CD8-positive, alpha-beta T cell (primary cell): ENCODE measurements at regions of chr2 and their contacts with region 1.

Region 1: DNA sequence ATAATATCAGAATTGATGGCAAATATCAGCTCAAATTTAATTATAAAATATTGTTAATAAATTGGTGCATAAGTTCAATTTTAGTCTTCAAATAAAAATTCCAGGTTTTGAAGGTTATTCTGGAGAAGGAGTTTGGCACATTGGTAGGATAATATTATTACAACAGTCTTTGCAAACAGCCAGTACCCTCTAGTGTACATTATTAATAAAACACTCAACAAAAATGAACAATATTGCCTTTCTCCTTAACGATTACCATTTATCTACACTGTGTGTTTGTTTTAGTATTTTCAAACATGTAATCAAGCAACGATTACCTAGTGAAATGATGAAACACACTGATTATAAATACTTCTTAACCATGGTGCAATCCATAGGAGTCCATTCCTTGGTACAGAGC is 334.0 kb upstream of the FSIP2 start:
- DNase-seq: no peak
- ATAC-seq: no peak
- H3K4me3 ChIP-seq: no peak overlapping the region
- H3K4me3 Mint-ChIP-seq: no peak overlapping the region
- H3K27ac ChIP-seq: no peak overlapping the region
- H3K27ac Mint-ChIP-seq: no peak overlapping the region
- H3K4me1 ChIP-seq: no peaks in the 10 kb centered on the region
- H3K4me1 Mint-ChIP-seq: no peaks in the 10 kb centered on the region
- H3K27me3 ChIP-seq: no peaks in the 10 kb centered on the region
- H3K27me3 Mint-ChIP-seq: no peaks in the 10 kb centered on the region
- CTCF ChIP-seq: no peak

Region 2: DNA sequence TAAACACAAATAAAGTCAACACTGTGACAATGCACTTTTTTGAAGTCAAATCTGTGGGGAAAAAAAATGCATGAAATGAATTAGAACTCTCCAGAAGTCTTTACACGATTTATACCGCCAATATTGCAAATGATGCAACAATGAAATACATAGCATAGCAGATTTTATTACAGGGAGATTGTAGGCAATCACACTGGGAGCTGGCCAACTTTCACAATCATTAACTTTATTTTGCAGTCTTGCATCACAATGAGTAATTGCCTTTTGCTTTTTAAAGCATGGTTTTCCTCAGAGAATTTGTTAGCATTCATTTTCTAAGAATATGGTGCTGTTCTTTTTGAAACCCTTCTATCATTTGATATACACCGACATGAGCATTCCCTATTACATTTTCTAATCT is 32.4 kb before region 1 on chr2:
- CTCF ChIA-PET with region 1: no interaction called
- POLR2A ChIA-PET with region 1: no interaction called
- intact Hi-C with region 1: loop called in 1 of 2 experiments (anchors 1 kb)
- DNase-seq: no peak
- ATAC-seq: no peak
- H3K4me3 ChIP-seq: no peak overlapping the region
- H3K4me3 Mint-ChIP-seq: no peak overlapping the region
- H3K27ac ChIP-seq: no peak overlapping the region
- H3K27ac Mint-ChIP-seq: no peak overlapping the region
- H3K4me1 ChIP-seq: no peaks in the 10 kb centered on the region
- H3K4me1 Mint-ChIP-seq: no peaks in the 10 kb centered on the region
- H3K27me3 ChIP-seq: no peaks in the 10 kb centered on the region
- H3K27me3 Mint-ChIP-seq: no peaks in the 10 kb centered on the region
- CTCF ChIP-seq: no peak

Region 3: GRCh38 chr2:185384822-185385560 is 19.6 kb before region 1 on chr2:
- CTCF ChIA-PET with region 1: no interaction called
- POLR2A ChIA-PET with region 1: no interaction called
- intact Hi-C with region 1: no loop called
- DNase-seq: no peak
- ATAC-seq: no peak
- H3K4me3 ChIP-seq: no peak overlapping the region
- H3K4me3 Mint-ChIP-seq: no peak overlapping the region
- H3K27ac ChIP-seq: no peak overlapping the region
- H3K27ac Mint-ChIP-seq: no peak overlapping the region
- H3K4me1 ChIP-seq: no peaks in the 10 kb centered on the region
- H3K4me1 Mint-ChIP-seq: no peaks in the 10 kb centered on the region
- H3K27me3 ChIP-seq: no peaks in the 10 kb centered on the region
- H3K27me3 Mint-ChIP-seq: no peaks in the 10 kb centered on the region
- CTCF ChIP-seq: no peak

Region 4: DNA sequence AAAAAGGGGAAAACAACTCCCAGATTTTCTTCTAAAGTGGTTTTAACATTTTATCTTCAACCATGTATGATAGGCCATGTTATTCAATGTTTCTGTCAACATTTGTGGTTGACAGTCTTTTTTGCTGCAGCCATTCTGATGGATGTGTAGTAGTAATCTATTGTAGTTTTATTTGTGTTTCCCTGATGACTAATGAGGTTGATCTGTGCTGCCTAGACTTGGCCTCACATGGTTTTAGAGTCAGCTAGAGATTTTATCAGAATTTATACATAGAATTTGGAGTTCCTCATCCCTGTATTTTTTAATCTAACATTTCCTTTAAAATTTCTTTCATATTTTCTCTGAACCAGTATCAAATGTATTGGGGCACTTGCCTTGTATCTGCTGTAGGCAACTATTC is 314.1 kb after region 1 on chr2:
- CTCF ChIA-PET with region 1: no interaction called
- POLR2A ChIA-PET with region 1: no interaction called
- intact Hi-C with region 1: no loop called
- DNase-seq: no peak
- ATAC-seq: no peak
- H3K4me3 ChIP-seq: no peak overlapping the region
- H3K4me3 Mint-ChIP-seq: no peak overlapping the region
- H3K27ac ChIP-seq: no peak overlapping the region
- H3K27ac Mint-ChIP-seq: no peak overlapping the region
- H3K4me1 ChIP-seq: no peaks in the 10 kb centered on the region
- H3K4me1 Mint-ChIP-seq: no peaks in the 10 kb centered on the region
- H3K27me3 ChIP-seq: no peaks in the 10 kb centered on the region
- H3K27me3 Mint-ChIP-seq: no peaks in the 10 kb centered on the region
- CTCF ChIP-seq: no peak

Region 5: DNA sequence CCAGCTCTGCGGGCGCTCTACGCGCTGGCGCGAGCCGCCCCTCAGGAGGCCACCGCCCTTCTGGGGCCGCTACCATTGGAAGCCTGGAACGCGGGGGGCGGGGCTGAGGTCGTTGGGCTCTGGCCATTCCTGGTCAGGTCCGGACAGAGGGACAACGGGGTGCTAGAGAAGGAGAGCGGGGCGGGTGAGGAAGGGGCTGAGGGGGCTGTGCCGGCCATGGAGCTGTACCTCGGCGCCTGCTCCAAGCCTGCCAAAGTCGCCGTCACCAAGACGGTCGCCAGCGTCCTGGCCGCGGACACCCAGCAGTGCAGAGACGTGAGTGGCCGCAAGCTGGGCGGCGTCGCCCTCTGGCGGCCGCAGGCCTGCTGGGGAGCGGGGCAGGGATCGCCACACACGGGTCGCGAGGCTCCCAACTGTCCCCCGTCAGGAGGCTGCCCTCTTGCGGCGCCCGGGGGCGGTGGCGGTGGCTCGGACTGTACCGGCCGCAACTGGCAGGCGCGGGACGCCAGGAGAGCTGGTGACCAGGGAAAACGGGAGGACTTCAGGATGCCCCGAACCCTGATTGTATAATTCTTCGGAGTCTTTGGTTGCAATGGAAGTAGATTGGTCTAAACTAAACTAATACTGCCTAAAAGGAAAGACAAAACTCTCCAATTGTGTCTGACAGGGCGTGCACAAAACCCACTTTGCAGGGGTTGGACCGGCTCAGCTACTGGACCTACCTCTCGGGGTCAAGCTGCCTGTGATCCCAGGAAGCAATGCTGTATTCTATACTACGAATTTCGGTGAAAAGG is 334.3 kb after region 1 on chr2 and contains the start of gene FSIP2:
- CTCF ChIA-PET with region 1: no interaction called
- POLR2A ChIA-PET with region 1: no interaction called
- intact Hi-C with region 1: no loop called
- DNase-seq: peak in 3 of 9 experiments; percentile 2 to 22 (median 4)
- ATAC-seq: no peak
- H3K4me3 ChIP-seq: no peak within 1 kb of the TSS
- H3K4me3 Mint-ChIP-seq: no peak within 1 kb of the TSS
- H3K27ac ChIP-seq: no peak within 1 kb of the TSS
- H3K27ac Mint-ChIP-seq: no peak within 1 kb of the TSS
- H3K4me1 ChIP-seq: no peaks in the 10 kb centered on the region
- H3K4me1 Mint-ChIP-seq: no peaks in the 10 kb centered on the region
- H3K27me3 ChIP-seq: no peaks in the 10 kb centered on the region
- H3K27me3 Mint-ChIP-seq: peaks cover 10% of the 10 kb centered on the region
- CTCF ChIP-seq: no peak
- total RNA-seq, gene FSIP2: 0.38 to 0.69 TPM